ENCODE measurements at regions of chr10 and their contacts with region 1.

Region 1: DNA sequence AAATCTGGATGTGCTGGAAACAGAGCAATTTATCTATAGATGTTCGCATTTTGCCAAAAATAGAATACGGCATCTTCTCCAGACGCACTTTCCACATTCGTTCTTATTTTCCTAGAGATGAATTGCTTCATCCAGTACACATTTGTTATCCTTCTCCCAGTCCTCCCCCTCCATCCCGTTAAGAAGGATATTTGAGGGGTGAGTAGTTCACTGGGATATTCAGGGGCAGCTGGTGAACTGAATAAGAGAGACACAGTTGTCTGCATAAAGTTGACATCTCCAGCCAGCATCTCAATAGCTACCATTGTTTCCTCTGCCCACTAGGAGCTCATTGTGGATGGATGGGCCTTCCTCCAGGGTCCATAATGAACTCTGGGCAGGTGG is 456.8 kb upstream of the NRP1 start:
- DNase-seq: no peak
- H3K4me3 ChIP-seq: no peak overlapping the region
- H3K27ac ChIP-seq: no peak overlapping the region
- H3K4me1 ChIP-seq: no peaks in the 10 kb centered on the region
- H3K27me3 ChIP-seq: no peaks in the 10 kb centered on the region
- CTCF ChIP-seq: no peak

Region 2: DNA sequence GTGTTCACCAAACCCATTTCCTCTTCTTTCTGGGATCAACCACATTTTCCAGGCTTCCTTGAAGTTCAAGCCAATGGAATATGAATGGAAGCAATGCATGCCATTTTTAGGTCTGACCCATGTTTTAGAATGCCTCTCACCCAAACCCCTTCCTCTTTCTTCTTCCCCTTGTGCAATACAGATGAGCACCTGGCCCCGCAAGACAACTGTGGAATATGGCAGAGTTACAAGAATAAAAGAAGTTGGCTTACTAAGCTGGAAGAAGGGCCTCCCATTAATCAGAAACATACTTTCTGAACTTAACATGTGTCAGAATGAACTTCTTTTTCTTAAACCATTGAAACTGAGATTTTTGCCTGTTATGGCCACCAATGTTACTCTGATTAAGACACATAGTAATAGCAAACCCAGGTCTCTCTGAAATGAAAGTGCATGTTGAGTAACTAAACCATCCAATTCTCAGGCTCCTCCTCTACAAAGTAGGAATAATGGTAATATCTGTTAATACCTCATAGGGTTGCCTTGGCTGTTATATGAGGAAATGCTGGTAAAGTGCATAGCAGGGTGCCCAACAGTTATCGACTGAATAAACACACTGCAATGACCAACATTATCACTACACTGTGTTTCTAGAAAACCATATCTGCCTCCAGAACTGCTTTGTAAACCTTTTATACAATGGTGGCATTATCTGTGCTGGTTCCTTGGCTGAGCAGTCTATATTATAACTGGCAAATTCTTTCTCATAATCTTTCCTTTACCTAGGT is 74.6 kb before region 1 on chr10:
- CTCF ChIA-PET with region 1: no interaction called
- POLR2A ChIA-PET with region 1: no interaction called
- intact Hi-C with region 1: loop called (anchors 2 kb)
- DNase-seq: no peak
- H3K4me3 ChIP-seq: no peak overlapping the region
- H3K27ac ChIP-seq: no peak overlapping the region
- H3K4me1 ChIP-seq: no peaks in the 10 kb centered on the region
- H3K27me3 ChIP-seq: no peaks in the 10 kb centered on the region
- CTCF ChIP-seq: no peak

Measured in A673 (cell line).